Sciatic nerve (tissue), 2 donors: ENCODE measurements at regions of chr7 and their contacts with region 1.

Region 1: DNA sequence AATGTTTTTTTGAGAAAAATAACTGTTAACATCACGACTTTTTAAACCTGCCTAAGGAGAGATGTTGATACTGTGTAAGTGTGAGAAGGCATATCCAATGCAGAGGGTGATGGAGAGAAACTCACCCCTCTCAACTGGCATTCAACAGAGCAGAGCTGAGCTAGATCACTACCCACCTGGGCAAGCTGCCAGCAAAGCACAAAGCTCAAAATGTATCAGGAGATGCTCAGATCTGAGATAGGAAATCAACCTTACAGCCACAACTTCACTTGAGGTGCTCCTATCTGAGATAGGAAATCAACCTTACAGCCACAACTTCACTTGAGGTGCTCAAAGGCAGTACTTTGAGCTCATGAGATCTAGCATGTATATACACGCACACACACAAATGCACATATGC is 151.5 kb upstream of the PDE1C start:
- DNase-seq: no peak
- ATAC-seq: no peak

Region 2: DNA sequence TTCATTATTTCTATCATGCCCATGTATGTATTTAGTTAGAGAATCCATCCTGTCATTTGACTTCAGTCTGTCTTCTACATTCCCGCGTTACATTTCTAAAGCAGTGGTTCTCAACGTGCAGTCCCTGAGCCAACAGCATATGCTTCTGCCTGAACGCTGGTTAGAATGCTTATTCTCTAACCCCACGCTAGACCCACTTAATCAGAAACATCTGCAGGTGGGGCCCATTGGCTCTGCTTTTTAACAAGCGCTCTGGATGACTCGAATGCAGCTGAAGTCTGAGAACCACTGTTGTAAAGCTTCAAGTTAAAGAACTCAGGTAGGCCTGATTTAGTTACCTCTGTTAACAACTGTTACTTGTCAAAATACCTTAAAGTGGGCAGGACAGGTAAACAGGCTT is 919.4 kb before region 1 on chr7:
- intact Hi-C with region 1: no loop called
- DNase-seq: no peak
- ATAC-seq: no peak

Region 3: GRCh38 chr7:32298408-32299132 is 76.8 kb after region 1 on chr7:
- intact Hi-C with region 1: loop called (anchors 10 kb)
- DNase-seq: peak; percentile 64
- ATAC-seq: peak; percentile 67